Activated B cell treated with CpG ODN at 0.5 μM for 24 hours (primary cell): ENCODE measurements at regions of chr2 and their contacts with region 1.

Region 1: GRCh38 chr2:47664817-47665216 is 118.1 kb upstream of the MSH6 start:
- DNase-seq: no peak
- ATAC-seq: no peak
- H3K4me3 Mint-ChIP-seq: no peak overlapping the region
- H3K27ac Mint-ChIP-seq: no peak overlapping the region
- H3K4me1 Mint-ChIP-seq: peaks cover 20% of the 10 kb centered on the region
- H3K27me3 Mint-ChIP-seq: no peaks in the 10 kb centered on the region
- CTCF ChIP-seq: no peak

Region 2: DNA sequence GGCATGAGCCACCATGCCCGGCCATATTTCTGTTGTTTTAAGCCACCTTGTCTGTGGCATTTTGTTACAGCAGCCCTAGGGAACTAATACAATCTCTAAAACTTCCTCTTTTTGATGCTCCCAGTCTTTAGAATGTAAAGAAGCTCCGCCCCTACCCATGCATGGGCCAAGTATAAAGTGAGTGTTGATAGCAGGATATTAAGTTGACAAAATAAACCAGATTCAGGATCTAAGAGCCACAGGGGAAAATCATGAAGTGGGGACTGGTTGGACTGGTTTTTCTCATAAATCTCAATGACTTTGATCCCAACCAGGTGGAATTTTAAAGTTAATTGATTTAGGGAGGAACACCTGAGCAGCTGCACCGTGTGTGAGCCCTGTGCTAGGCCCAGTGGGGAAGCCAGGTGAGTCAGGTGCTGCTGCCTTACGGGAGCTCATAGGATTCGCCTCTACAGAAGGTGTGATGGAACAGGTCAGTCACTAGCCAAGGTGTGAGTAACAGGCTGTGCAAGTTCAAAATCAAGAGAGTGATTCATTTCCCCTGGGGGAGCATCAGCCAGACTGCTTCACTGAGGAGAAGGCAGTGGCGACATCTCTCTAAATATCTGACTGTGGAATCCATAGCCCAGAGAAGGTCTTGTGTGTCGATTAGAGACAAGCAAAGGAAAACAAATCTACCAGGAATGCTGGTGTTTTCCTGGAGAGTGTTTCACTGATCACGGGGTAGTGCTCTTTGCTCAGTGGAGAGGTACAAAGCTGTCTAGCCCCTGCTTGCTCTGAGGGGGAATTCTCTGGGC is 324.9 kb before region 1 on chr2:
- CTCF ChIA-PET with region 1: no interaction called
- POLR2A ChIA-PET with region 1: no interaction called
- intact Hi-C with region 1: loop called (anchors 10 kb)
- DNase-seq: no peak
- ATAC-seq: peak; percentile 30
- H3K4me3 Mint-ChIP-seq: no peak overlapping the region
- H3K27ac Mint-ChIP-seq: no peak overlapping the region
- H3K4me1 Mint-ChIP-seq: peaks cover 30% of the 10 kb centered on the region
- H3K27me3 Mint-ChIP-seq: peaks cover 7% of the 10 kb centered on the region
- CTCF ChIP-seq: no peak